ENCODE measurements at regions of chr6 and their contacts with region 1.

Region 1: DNA sequence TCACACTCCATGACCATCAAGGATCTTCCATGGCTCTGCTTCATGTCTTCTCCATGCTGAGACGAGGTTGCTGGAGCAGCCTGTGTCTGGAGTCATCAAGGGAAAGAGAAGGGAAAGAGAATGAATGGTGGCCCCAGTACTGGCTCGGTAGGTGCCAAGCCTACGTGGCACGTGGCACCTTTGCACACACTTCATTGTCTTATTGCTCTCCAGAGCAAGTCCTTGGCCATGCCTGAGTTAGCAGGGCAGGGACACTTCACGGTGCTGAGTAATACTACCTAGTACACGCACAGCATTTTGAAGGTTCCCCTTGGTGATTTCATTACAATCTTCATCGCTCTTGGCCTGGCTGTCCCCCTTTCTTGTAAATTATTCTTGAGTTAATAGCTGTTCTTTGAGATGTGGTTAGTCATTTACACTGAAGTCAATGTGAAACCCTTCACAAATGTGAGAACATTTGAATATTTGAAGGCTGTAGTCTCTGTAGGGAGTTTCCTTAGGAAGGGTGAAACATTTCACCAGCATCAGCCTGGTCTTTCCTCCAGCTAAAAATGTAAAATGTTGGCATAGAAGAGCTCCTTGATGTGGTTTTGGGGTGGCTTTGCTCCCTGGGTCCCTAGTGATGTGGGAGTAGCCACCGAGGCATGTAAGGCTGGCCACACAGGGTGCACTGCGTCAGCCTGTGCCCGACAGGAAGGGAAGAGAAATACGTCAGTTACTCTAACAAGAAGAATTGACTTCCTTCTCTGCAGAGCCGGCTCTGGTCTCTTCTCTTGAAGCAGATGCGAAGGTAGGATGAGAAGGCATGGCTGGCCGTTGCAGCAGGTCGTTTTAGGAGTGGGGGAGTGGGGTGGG is at the start of gene SYTL3:
- DNase-seq: peak; percentile 95
- H3K4me3 Mint-ChIP-seq: peak within 1 kb of the TSS; percentile 76
- H3K27ac Mint-ChIP-seq: peak within 1 kb of the TSS; percentile 98
- H3K4me1 Mint-ChIP-seq: peaks cover 72% of the 10 kb centered on the region
- H3K27me3 Mint-ChIP-seq: no peaks in the 10 kb centered on the region
- total RNA-seq, gene SYTL3: 115 to 120 TPM

Region 2: DNA sequence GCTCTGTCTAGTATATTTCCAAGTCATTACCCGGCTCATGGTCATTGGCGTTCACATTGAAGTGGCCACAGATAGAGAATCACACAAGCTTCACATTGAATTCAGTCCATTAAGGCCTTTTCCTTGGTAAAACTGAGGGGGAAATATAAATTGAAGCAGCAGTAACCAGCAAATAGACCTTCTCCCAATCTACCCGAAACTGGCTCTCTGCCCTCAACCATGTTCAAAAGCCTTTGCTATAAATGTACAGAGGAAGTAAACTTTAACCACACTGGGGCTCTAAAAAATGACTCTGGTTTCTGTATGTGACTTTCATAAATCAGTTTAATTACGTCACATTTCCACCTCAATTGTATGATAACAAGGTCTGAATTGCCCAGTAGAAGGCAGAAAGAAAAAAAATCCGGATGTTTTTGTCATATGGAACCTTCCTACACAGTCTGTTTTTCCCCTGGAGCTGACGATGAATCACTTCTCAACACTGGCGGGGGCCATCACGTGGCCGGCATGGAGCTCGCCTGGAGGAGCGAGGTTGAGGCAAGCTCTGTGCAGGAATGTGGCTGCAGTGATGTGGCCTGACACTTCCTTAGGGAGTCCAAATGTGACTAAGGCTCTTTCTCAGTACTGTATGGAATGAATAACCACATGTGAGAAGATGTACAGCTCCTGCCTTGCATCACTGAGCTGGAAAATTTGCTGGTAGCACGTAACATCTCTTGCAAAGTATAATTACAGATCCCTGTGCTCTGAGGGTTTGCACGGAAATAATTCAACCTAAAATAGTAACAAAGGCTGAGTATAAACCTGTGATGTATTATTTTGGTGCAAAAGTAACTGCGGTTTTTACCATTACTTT is 885.1 kb before region 1 on chr6:
- CTCF ChIA-PET with region 1: no interaction called
- intact Hi-C with region 1: loop called (anchors 2 kb)
- DNase-seq: peak; percentile 94
- H3K4me3 Mint-ChIP-seq: peak overlapping the region; percentile 7
- H3K27ac Mint-ChIP-seq: peak overlapping the region; percentile 91
- H3K4me1 Mint-ChIP-seq: peaks cover 86% of the 10 kb centered on the region
- H3K27me3 Mint-ChIP-seq: no peaks in the 10 kb centered on the region

Region 3: GRCh38 chr6:158207422-158207788 is 442.1 kb before region 1 on chr6:
- CTCF ChIA-PET with region 1: no interaction called
- intact Hi-C with region 1: loop called (anchors 1 kb)
- DNase-seq: peak; percentile 66
- H3K4me3 Mint-ChIP-seq: peak overlapping the region; percentile 5
- H3K27ac Mint-ChIP-seq: peak overlapping the region; percentile 78
- H3K4me1 Mint-ChIP-seq: peaks cover 34% of the 10 kb centered on the region
- H3K27me3 Mint-ChIP-seq: no peaks in the 10 kb centered on the region

Region 4: GRCh38 chr6:158539413-158539812 is 110.1 kb before region 1 on chr6:
- CTCF ChIA-PET with region 1: no interaction called
- intact Hi-C with region 1: no loop called
- DNase-seq: no peak
- H3K4me3 Mint-ChIP-seq: no peak overlapping the region
- H3K27ac Mint-ChIP-seq: no peak overlapping the region
- H3K4me1 Mint-ChIP-seq: no peaks in the 10 kb centered on the region
- H3K27me3 Mint-ChIP-seq: peaks cover 32% of the 10 kb centered on the region

Region 5: GRCh38 chr6:158660333-158660754 is 10.8 kb after region 1 on chr6:
- CTCF ChIA-PET with region 1: interaction called, 14 read pairs
- intact Hi-C with region 1: loop called (anchors 2 kb)
- DNase-seq: peak; percentile 68
- H3K4me3 Mint-ChIP-seq: no peak overlapping the region
- H3K27ac Mint-ChIP-seq: no peak overlapping the region
- H3K4me1 Mint-ChIP-seq: peaks cover 69% of the 10 kb centered on the region
- H3K27me3 Mint-ChIP-seq: no peaks in the 10 kb centered on the region

Region 6: GRCh38 chr6:158853072-158853871 is 203.8 kb after region 1 on chr6:
- CTCF ChIA-PET with region 1: no interaction called
- intact Hi-C with region 1: loop called (anchors 1 kb)
- DNase-seq: peak; percentile 95
- H3K4me3 Mint-ChIP-seq: no peak overlapping the region
- H3K27ac Mint-ChIP-seq: no peak overlapping the region
- H3K4me1 Mint-ChIP-seq: peaks cover 29% of the 10 kb centered on the region
- H3K27me3 Mint-ChIP-seq: no peaks in the 10 kb centered on the region

Region 7: DNA sequence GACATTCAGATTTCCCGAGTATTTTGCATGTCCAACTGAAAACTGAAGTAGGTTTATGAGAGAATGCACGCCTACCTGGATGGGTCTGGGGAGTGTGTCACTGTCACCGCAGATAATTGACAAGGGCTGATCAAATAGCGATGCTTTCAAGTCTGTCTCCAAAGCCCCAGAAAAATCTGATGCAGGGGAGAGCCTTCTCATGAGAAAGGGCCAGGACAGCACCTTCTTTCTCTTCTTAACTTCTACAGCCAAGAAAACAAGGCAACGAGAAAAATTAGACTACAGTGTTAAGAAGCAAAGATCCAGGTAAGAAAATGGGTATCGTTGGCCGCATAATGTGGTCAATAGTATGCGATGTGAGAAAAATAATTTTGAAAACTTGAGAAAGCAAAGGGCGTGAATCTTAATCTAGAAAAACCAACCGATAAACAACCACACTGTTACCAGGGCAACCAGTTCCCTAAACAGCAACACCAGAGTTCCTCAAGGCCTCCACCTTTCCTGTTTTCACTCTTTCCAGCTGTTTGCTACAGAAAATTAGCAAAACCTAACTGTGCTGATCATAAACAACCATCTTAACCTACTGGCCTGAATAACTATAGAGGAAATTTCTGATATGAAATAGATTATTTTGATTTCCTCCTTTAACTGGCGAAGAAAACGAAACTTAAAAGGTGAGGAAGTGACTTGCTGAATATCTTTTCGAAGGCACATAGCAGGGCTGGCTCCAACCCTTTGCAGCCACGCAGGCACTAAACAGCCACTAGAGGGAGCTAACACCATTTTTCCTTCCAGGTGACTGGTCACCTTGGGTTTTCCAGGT is 392.7 kb after region 1 on chr6:
- CTCF ChIA-PET with region 1: interaction called, 3 read pairs
- intact Hi-C with region 1: loop called (anchors 1 kb)
- DNase-seq: peak; percentile 86
- H3K4me3 Mint-ChIP-seq: peak overlapping the region; percentile 96
- H3K27ac Mint-ChIP-seq: peak overlapping the region; percentile 98
- H3K4me1 Mint-ChIP-seq: peaks cover 69% of the 10 kb centered on the region
- H3K27me3 Mint-ChIP-seq: no peaks in the 10 kb centered on the region

Region 8: GRCh38 chr6:159979136-159979874 is 1329.8 kb after region 1 on chr6:
- CTCF ChIA-PET with region 1: no interaction called
- intact Hi-C with region 1: loop called (anchors 5 kb)
- DNase-seq: peak; percentile 87
- H3K4me3 Mint-ChIP-seq: peak overlapping the region; percentile 65
- H3K27ac Mint-ChIP-seq: peak overlapping the region; percentile 98
- H3K4me1 Mint-ChIP-seq: peaks cover 92% of the 10 kb centered on the region
- H3K27me3 Mint-ChIP-seq: no peaks in the 10 kb centered on the region

Measured in activated naive CD4-positive, alpha-beta T cell treated with anti-CD3 and anti-CD28 coated beads for 36 hours (primary cell).